ENCODE measurements at regions of chr1 and their contacts with region 1.

Region 1: DNA sequence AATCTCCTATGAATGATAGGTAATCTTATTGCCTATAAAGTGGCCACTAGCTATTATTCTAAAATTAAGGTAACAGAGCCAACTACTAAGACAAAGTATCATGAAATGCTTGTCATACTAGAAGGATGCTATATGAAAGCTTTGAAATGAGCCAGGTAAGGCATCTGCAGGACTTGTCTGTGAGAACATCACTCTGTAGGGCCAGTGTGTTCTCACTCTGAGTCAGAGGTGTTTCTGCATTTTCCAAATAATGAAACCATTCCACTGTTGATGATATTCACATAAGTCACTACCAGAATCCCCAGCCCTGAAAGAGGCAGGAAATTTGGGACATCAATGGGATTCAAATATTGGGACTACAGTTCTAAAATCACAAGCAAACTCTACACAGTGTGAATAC is 25.8 kb upstream of the GBP5 start:
- DNase-seq: no peak
- H3K4me3 ChIP-seq: no peak overlapping the region
- H3K4me3 Mint-ChIP-seq: no peak overlapping the region
- H3K27ac ChIP-seq: no peak overlapping the region
- H3K27ac Mint-ChIP-seq: peak overlapping the region in 2 of 7 donors; percentile 35 to 62
- H3K4me1 ChIP-seq: peaks cover 45% of the 10 kb centered on the region
- H3K4me1 Mint-ChIP-seq: peaks cover 34 to 74% (median 43%) of the 10 kb centered on the region in 4 donors
- H3K27me3 ChIP-seq: no peaks in the 10 kb centered on the region
- H3K27me3 Mint-ChIP-seq: no peaks in the 10 kb centered on the region

Region 2: GRCh38 chr1:89022167-89022959 is 276.1 kb before region 1 on chr1 and contains the start of gene GBP3:
- CTCF ChIA-PET with region 1: no interaction called
- POLR2A ChIA-PET with region 1: no interaction called
- intact Hi-C with region 1: no loop called
- DNase-seq: peak in 4 of 5 donors; percentile 39 to 56 (median 45)
- H3K4me3 ChIP-seq: peak within 1 kb of the TSS; percentile 49 to 87
- H3K4me3 Mint-ChIP-seq: peak within 1 kb of the TSS; percentile 90 to 100 (median 95)
- H3K27ac ChIP-seq: peak within 1 kb of the TSS; percentile 73
- H3K27ac Mint-ChIP-seq: peak within 1 kb of the TSS; percentile 84 to 99 (median 94)
- H3K4me1 ChIP-seq: peaks cover 39% of the 10 kb centered on the region
- H3K4me1 Mint-ChIP-seq: peaks cover 29 to 69% (median 45%) of the 10 kb centered on the region in 4 donors
- H3K27me3 ChIP-seq: no peaks in the 10 kb centered on the region
- H3K27me3 Mint-ChIP-seq: no peaks in the 10 kb centered on the region
- total RNA-seq, gene GBP3: 51.8 to 54.1 TPM

Region 3: DNA sequence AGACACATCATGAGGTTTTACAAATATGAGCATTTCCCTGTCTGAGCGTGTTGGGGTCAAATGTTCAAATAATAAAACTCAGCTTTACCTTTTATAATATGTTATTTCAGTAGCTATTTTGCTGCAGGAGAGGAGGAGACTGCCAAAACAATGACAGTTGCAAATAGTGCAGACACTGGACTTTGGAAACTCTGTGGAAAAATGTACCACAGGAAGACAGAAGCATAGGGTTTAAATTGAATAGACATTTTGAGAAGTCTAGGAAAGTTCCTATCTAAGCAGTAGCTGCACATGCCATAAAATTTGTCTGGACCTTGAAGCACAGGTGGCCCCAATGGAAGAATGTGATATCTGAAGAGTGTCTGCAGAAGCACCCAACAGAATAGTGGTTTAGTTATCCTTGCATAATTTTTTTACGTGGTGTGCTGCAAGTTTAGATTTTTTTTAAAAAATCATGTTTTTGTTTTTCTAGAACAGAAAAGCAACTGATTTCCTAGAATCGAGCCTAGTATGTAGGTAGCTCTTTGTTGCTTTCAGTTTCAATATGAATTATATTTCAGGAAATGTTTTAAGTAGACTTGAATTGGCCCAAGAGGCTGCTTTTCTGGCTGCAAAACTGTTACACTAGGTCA is 11.8 kb before region 1 on chr1:
- CTCF ChIA-PET with region 1: interaction called, 4 read pairs
- POLR2A ChIA-PET with region 1: interaction called, 20 read pairs
- intact Hi-C with region 1: loop called (anchors 1 kb)
- DNase-seq: peak in 4 of 5 donors; percentile 39 to 58 (median 46)
- H3K4me3 ChIP-seq: peak overlapping the region; percentile 14 to 21
- H3K4me3 Mint-ChIP-seq: peak overlapping the region; percentile 45 to 78 (median 76)
- H3K27ac ChIP-seq: peak overlapping the region; percentile 61
- H3K27ac Mint-ChIP-seq: peak overlapping the region; percentile 83 to 96 (median 94)
- H3K4me1 ChIP-seq: peaks cover 67% of the 10 kb centered on the region
- H3K4me1 Mint-ChIP-seq: peaks cover 60 to 76% (median 69%) of the 10 kb centered on the region in 4 donors
- H3K27me3 ChIP-seq: no peaks in the 10 kb centered on the region
- H3K27me3 Mint-ChIP-seq: no peaks in the 10 kb centered on the region

Region 4: DNA sequence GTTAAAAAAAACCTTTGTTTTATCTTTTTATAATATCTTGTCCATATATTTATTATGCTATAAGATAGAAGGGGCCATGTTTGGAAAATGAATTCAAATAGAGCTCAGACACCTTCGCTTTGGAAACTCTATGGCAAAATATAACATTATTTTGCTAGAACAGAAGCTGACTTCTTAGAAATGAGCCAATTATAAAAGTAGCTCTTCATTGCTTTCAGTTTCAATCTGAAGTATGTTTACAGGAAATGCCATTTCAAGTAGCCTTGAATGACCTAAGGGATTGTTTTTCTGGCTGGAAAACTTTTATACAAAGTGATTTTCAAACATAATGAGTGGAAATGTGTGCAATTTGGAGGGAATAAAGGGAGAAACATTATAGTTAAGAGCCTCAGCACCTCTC is 12.0 kb after region 1 on chr1:
- CTCF ChIA-PET with region 1: interaction called, 3 read pairs
- POLR2A ChIA-PET with region 1: interaction called, 12 read pairs
- intact Hi-C with region 1: loop called (anchors 1 kb)
- DNase-seq: peak in 3 of 5 donors; percentile 17 to 27 (median 18)
- H3K4me3 ChIP-seq: peak overlapping the region in 1 of 2 donors; percentile 7
- H3K4me3 Mint-ChIP-seq: peak overlapping the region; percentile 37 to 84 (median 70)
- H3K27ac ChIP-seq: no peak overlapping the region
- H3K27ac Mint-ChIP-seq: peak overlapping the region; percentile 62 to 94 (median 81)
- H3K4me1 ChIP-seq: peaks cover 62% of the 10 kb centered on the region
- H3K4me1 Mint-ChIP-seq: peaks cover 30 to 66% (median 47%) of the 10 kb centered on the region in 4 donors
- H3K27me3 ChIP-seq: no peaks in the 10 kb centered on the region
- H3K27me3 Mint-ChIP-seq: no peaks in the 10 kb centered on the region

Region 5: DNA sequence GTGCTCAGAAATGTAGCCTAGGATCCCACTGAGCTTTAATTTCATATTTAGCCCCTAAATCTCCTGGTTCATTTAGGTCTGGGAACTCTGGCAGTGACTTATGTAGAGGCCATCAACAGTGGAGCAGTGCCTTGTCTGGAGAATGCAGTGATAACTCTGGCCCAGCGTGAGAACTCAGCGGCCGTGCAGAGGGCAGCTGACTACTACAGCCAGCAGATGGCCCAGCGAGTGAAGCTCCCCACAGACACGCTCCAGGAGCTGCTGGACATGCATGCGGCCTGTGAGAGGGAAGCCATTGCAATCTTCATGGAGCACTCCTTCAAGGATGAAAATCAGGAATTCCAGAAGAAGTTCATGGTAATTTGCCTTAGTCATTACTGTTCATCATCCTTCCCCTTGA is 83.2 kb after region 1 on chr1:
- CTCF ChIA-PET with region 1: no interaction called
- POLR2A ChIA-PET with region 1: no interaction called
- intact Hi-C with region 1: no loop called
- DNase-seq: no peak
- H3K4me3 ChIP-seq: no peak overlapping the region
- H3K4me3 Mint-ChIP-seq: no peak overlapping the region
- H3K27ac ChIP-seq: no peak overlapping the region
- H3K27ac Mint-ChIP-seq: no peak overlapping the region
- H3K4me1 ChIP-seq: no peaks in the 10 kb centered on the region
- H3K4me1 Mint-ChIP-seq: no peaks in the 10 kb centered on the region
- H3K27me3 ChIP-seq: no peaks in the 10 kb centered on the region
- H3K27me3 Mint-ChIP-seq: no peaks in the 10 kb centered on the region